ENCODE measurements at regions of chr1 and their contacts with region 1.

Region 1: GRCh38 chr1:161805399-161806197 is 39.5 kb downstream of the ATF6 start:
- DNase-seq: no peak
- ATAC-seq: no peak; the same call in 1 of the 2 replicates
- H3K4me3 ChIP-seq: no peak overlapping the region
- H3K27ac ChIP-seq: no peak overlapping the region
- H3K4me1 ChIP-seq: no peaks in the 10 kb centered on the region
- H3K27me3 ChIP-seq: no peaks in the 10 kb centered on the region
- CTCF ChIP-seq: no peak
- POLR2A ChIP-seq: no peak
- RAD21 ChIP-seq: no peak

Region 2: DNA sequence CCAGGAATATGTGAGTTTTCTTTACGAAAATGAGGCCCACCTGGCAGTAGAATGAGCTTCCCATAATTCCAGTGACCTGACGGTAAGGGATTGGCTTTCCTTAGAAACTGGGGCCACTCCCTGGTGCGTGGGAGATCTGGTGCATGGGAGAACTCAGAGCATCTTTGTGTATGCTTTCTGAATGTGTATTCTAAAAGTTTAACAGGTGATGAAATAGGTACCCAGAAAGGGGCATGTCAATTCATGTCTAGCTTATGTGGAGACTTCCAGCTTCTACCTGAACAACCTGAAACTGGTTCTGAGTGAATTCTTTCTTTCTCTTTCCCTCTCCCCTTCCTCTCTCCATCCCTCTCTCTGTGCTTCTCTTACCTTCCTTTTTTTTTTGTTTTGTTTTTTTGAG is 113.8 kb before region 1 on chr1:
- CTCF ChIA-PET with region 1: no interaction called
- POLR2A ChIA-PET with region 1: no interaction called
- dilution Hi-C with region 1: no loop called
- in situ Hi-C with region 1: no loop called
- intact Hi-C with region 1: no loop called
- DNase-seq: no peak
- ATAC-seq: no peak
- H3K4me3 ChIP-seq: no peak overlapping the region
- H3K27ac ChIP-seq: no peak overlapping the region
- H3K4me1 ChIP-seq: no peaks in the 10 kb centered on the region
- H3K27me3 ChIP-seq: peaks cover 6% of the 10 kb centered on the region
- CTCF ChIP-seq: no peak
- POLR2A ChIP-seq: no peak
- RAD21 ChIP-seq: no peak

Region 3: DNA sequence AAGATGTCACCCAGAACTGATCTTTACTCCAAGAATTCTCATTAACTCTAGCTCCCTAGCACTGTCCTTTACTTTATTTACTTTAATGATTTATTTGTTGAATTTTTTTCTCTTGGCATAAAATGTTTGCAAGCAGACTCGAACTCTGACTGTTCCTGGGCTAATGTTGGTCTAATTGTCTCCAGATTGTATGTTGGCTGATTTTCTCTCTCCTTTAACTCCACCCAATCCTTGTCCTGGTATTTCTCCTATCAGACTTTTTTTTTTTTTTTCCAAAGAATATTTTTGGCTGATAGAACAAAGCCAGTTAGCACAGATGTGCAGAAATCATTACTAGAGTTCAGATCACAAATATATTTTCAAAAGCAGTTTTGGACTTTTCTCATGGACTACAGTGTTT is 43.1 kb after region 1 on chr1:
- CTCF ChIA-PET with region 1: no interaction called
- POLR2A ChIA-PET with region 1: no interaction called
- dilution Hi-C with region 1: no loop called
- in situ Hi-C with region 1: no loop called
- intact Hi-C with region 1: no loop called
- DNase-seq: no peak
- ATAC-seq: no peak
- H3K4me3 ChIP-seq: no peak overlapping the region
- H3K27ac ChIP-seq: no peak overlapping the region
- H3K4me1 ChIP-seq: peaks cover 2% of the 10 kb centered on the region; the same call in 1 of the 2 replicates
- H3K27me3 ChIP-seq: no peaks in the 10 kb centered on the region
- CTCF ChIP-seq: no peak
- POLR2A ChIP-seq: no peak
- RAD21 ChIP-seq: no peak

Region 4: GRCh38 chr1:162023547-162024501 is 218.2 kb after region 1 on chr1 and contains the start of gene OLFML2B:
- CTCF ChIA-PET with region 1: no interaction called
- POLR2A ChIA-PET with region 1: no interaction called
- dilution Hi-C with region 1: no loop called
- in situ Hi-C with region 1: no loop called
- intact Hi-C with region 1: loop called (anchors 5 kb)
- DNase-seq: peak; percentile 76
- ATAC-seq: peak; percentile 93
- H3K4me3 ChIP-seq: peak within 1 kb of the TSS; percentile 68
- H3K27ac ChIP-seq: no peak within 1 kb of the TSS; the same call in 1 of the 2 replicates
- H3K4me1 ChIP-seq: peaks cover 5% of the 10 kb centered on the region; the same call in 1 of the 2 replicates
- H3K27me3 ChIP-seq: peaks cover 6% of the 10 kb centered on the region
- CTCF ChIP-seq: peak; percentile 52
- POLR2A ChIP-seq: no peak
- RAD21 ChIP-seq: peak; percentile 66
- total RNA-seq, gene OLFML2B: 0.36 and 0.56 TPM in 2 replicates

Region 5: DNA sequence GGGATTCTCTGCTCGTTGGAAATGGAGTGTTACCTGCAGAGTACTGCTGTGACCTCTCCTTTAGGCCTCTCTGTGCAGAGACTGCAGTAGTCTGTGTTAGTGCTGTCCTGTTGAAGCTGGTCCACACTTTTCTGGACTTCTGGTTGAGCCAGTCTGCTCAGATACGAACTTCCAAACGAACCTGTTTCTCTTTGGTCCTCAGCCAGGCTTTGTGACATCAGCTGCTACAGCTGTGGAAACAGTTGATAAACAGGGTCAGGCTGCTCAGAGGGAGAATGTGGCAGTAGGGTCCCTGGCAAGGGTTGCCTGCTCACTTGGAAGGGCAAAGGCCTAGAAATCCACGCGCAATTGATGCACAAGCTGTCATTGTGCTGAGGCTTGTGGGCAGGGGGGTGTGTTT is 362.7 kb after region 1 on chr1:
- CTCF ChIA-PET with region 1: no interaction called
- POLR2A ChIA-PET with region 1: no interaction called
- dilution Hi-C with region 1: no loop called
- in situ Hi-C with region 1: no loop called
- intact Hi-C with region 1: no loop called
- DNase-seq: no peak
- ATAC-seq: no peak
- H3K4me3 ChIP-seq: no peak overlapping the region
- H3K27ac ChIP-seq: no peak overlapping the region
- H3K4me1 ChIP-seq: no peaks in the 10 kb centered on the region
- H3K27me3 ChIP-seq: peaks cover 14% of the 10 kb centered on the region
- CTCF ChIP-seq: no peak
- POLR2A ChIP-seq: no peak
- RAD21 ChIP-seq: no peak

Region 6: DNA sequence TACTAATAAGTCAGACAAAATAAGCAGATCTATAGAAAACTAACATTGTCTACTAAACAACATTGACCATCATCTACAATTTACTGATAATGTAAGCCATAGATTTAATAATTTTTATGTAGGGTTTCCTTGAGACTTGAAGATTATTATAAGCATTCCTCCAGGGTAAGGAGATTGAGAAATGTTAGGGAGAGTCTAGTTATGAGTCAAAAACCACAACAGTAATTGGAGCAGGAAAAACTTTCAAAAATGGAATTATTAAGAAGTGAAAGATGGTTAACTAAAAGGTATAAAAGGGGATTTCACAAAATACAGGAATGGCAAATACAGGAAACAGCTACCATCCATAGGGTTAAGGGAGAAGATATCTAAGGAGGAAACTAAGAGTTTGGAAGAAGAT is 679.6 kb after region 1 on chr1:
- CTCF ChIA-PET with region 1: no interaction called
- POLR2A ChIA-PET with region 1: no interaction called
- dilution Hi-C with region 1: no loop called
- in situ Hi-C with region 1: no loop called
- intact Hi-C with region 1: no loop called
- DNase-seq: peak; percentile 18
- ATAC-seq: peak; percentile 49; the same call in 1 of the 2 replicates
- H3K4me3 ChIP-seq: no peak overlapping the region
- H3K27ac ChIP-seq: no peak overlapping the region
- H3K4me1 ChIP-seq: no peaks in the 10 kb centered on the region
- H3K27me3 ChIP-seq: no peaks in the 10 kb centered on the region
- CTCF ChIP-seq: no peak
- POLR2A ChIP-seq: no peak
- RAD21 ChIP-seq: no peak

Measured in IMR-90 (cell line).